Testis (tissue), 5 donors: ENCODE measurements at regions of chr11 and their contacts with region 1.

Region 1: GRCh38 chr11:18395735-18396504 is 1.6 kb downstream of the LDHA start:
- DNase-seq: peak; percentile 97
- H3K4me3 ChIP-seq: peak overlapping the region; percentile 53 to 96
- H3K27ac ChIP-seq: peak overlapping the region; percentile 90 to 91
- H3K4me1 ChIP-seq: peaks cover 14% of the 10 kb centered on the region
- H3K27me3 ChIP-seq: no peaks in the 10 kb centered on the region
- CTCF ChIP-seq: no peak
- POLR2A ChIP-seq: peak; percentile 61

Region 2: DNA sequence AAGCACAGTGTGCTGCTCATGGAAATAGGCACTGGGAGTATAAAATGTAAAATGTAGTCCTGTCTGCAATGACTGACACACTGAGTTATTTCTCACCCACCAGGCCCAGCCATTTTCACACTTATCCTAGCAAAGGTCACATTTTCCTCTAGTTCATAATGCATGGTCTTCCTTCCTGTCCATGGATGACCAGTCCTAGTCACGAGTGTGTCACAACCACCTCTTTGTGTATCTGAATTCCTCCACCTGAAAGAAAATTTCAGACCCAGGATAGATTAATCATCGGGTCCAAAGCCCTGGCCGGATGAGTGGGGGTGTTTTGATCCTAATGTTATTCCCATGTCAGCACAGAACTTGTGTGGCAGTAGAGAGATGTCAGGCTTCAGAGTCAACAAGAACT is 223.3 kb before region 1 on chr11 and contains the start of gene MRGPRX4:
- intact Hi-C with region 1: no loop called
- DNase-seq: no peak
- H3K4me3 ChIP-seq: no peak within 1 kb of the TSS
- H3K27ac ChIP-seq: no peak within 1 kb of the TSS
- H3K4me1 ChIP-seq: no peaks in the 10 kb centered on the region
- H3K27me3 ChIP-seq: no peaks in the 10 kb centered on the region
- CTCF ChIP-seq: no peak
- POLR2A ChIP-seq: no peak
- total RNA-seq, gene MRGPRX4: not detected

Region 3: DNA sequence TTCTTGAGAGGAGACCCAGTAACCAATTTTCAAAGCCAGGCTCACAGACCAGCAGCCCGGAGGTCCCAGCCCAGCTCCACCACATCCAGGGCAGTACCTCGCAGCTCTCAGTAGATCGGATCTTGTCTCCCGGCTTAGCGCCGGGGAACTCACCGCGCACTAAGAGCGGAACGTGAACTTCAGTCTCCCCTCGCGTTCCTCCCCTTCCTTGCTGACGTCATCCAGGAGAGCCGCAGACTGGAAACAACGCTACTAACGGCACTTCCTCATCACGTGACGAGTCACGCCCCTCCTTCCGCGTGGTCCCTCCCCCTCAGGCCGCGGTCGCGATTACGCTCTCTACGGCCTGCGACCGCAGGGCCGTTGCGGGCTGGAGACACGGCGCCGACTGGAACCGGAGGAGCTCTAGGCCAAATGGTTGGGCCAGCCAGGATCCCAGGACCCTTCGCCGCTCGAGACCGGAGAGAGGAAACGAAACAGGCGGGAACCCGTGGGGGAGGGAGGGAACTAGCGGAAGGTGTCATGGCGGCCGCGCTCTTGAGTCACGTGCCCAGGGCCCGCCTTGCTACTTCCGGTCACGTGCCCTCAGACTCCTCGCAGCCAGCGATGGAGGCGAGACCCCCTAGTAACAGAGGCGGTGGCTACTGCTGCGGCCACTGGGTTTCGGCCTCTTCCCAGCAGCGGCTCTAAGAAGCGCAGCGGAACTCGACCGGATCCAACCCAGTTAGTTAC is 73.8 kb before region 1 on chr11 and contains the starts of genes GTF2H1 and HPS5:
- intact Hi-C with region 1: loop called (anchors 5 kb)
- DNase-seq: peak; percentile 98
- H3K4me3 ChIP-seq: peak within 1 kb of the TSS; percentile 65 to 81
- H3K27ac ChIP-seq: peak within 1 kb of the TSS; percentile 92 to 98
- H3K4me1 ChIP-seq: peaks cover 21% of the 10 kb centered on the region
- H3K27me3 ChIP-seq: no peaks in the 10 kb centered on the region
- CTCF ChIP-seq: no peak
- POLR2A ChIP-seq: peak; percentile 73
- total RNA-seq, gene GTF2H1: 103 to 111 TPM
- total RNA-seq, gene HPS5: 97.7 to 111 TPM